ENCODE measurements at regions of chr4 and their contacts with region 1.

Region 1: GRCh38 chr4:164768516-164768915 is 14.6 kb downstream of the SMIM31 start:
- H3K4me3 ChIP-seq: no peak overlapping the region
- H3K27ac ChIP-seq: no peak overlapping the region
- H3K4me1 ChIP-seq: no peaks in the 10 kb centered on the region
- CTCF ChIP-seq: no peak

Region 2: GRCh38 chr4:164779811-164780216 is 11.3 kb after region 1 on chr4:
- CTCF ChIA-PET with region 1: interaction called, 15 read pairs
- POLR2A ChIA-PET with region 1: no interaction called
- H3K4me3 ChIP-seq: no peak overlapping the region
- H3K27ac ChIP-seq: no peak overlapping the region
- H3K4me1 ChIP-seq: no peaks in the 10 kb centered on the region
- CTCF ChIP-seq: no peak

Region 3: GRCh38 chr4:165096776-165097175 is 328.3 kb after region 1 on chr4:
- CTCF ChIA-PET with region 1: interaction called, 15 read pairs
- POLR2A ChIA-PET with region 1: no interaction called
- H3K4me3 ChIP-seq: no peak overlapping the region
- H3K27ac ChIP-seq: no peak overlapping the region
- H3K4me1 ChIP-seq: no peaks in the 10 kb centered on the region
- CTCF ChIP-seq: no peak

Measured in HEK293 (cell line).